Ascending aorta (tissue), 2 donors: ENCODE measurements at regions of chr1 and their contacts with region 1.

Region 1: GRCh38 chr1:11272832-11273594 is at the start of gene UBIAD1:
- DNase-seq: peak; percentile 39 to 86
- H3K4me3 ChIP-seq: peak within 1 kb of the TSS; percentile 91 to 96
- H3K27ac ChIP-seq: peak within 1 kb of the TSS; percentile 79 to 93
- H3K4me1 ChIP-seq: peaks cover 0 to 29% of the 10 kb centered on the region in 2 donors
- H3K27me3 ChIP-seq: no peaks in the 10 kb centered on the region
- CTCF ChIP-seq: peak in 1 of 3 experiments; percentile 25
- total RNA-seq, gene UBIAD1: 53.0 TPM

Region 2: DNA sequence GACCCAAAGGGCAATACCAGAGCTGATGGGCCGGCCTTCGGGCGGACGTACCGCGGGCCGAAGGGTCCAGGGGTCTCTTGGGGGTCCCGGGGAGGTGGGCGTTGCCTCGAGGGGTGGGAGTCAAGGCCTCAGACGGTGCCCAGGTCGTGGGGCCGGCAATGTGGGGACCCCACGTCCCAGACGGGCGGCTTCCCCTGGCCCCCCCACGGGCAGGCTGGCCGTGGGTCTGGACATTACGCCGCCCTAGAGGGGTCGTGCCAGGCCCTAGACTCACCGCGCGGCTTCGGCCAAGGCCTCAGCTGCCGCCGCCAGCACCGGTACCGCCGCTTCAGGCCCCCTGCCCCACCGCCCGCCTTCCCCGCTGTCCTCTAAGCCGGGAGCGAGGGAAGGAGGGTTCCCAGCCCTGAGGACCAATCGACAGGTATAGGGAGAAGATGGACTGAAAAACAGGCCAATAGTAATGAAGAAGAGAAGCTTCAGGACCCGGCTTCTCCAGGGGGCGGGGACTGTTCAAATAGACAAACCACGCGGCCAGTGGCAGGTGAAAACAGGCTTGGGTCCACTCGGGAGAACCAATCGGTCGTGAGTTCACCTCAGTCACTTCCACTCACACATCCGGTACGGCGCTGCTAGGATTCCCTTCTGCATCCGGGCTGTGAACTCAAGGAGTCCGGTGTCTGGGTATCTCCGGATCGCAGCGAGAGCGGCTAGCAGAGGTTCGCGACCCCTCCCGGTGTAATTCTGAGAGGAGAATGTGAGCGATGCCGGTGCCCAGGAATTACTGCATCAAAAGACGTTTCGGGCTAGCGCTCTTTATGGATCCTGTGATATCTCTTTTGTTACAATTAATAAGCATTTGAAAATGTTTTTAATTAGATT is 10.6 kb before region 1 on chr1 and contains the start of gene MTOR:
- intact Hi-C with region 1: loop called (anchors 1 kb)
- DNase-seq: peak; percentile 98 to 100
- H3K4me3 ChIP-seq: peak within 1 kb of the TSS; percentile 75 to 84
- H3K27ac ChIP-seq: peak within 1 kb of the TSS; percentile 59 to 67
- H3K4me1 ChIP-seq: peaks cover 5 to 11% of the 10 kb centered on the region in 2 donors
- H3K27me3 ChIP-seq: no peaks in the 10 kb centered on the region
- CTCF ChIP-seq: peak in 1 of 3 experiments; percentile 7
- total RNA-seq, gene MTOR: 28.0 TPM